Endothelial cell of umbilical vein (primary cell): ENCODE measurements at regions of chr14 and their contacts with region 1.

Region 1: GRCh38 chr14:93132470-93133065 is 16.8 kb upstream of the ITPK1 start:
- DNase-seq: peak; percentile 52
- H3K4me3 ChIP-seq: no peak overlapping the region
- H3K27ac ChIP-seq: no peak overlapping the region
- H3K4me1 ChIP-seq: no peaks in the 10 kb centered on the region
- H3K27me3 ChIP-seq: no peaks in the 10 kb centered on the region
- CTCF ChIP-seq: peak; percentile 30 to 65
- POLR2A ChIP-seq: no peak

Region 2: DNA sequence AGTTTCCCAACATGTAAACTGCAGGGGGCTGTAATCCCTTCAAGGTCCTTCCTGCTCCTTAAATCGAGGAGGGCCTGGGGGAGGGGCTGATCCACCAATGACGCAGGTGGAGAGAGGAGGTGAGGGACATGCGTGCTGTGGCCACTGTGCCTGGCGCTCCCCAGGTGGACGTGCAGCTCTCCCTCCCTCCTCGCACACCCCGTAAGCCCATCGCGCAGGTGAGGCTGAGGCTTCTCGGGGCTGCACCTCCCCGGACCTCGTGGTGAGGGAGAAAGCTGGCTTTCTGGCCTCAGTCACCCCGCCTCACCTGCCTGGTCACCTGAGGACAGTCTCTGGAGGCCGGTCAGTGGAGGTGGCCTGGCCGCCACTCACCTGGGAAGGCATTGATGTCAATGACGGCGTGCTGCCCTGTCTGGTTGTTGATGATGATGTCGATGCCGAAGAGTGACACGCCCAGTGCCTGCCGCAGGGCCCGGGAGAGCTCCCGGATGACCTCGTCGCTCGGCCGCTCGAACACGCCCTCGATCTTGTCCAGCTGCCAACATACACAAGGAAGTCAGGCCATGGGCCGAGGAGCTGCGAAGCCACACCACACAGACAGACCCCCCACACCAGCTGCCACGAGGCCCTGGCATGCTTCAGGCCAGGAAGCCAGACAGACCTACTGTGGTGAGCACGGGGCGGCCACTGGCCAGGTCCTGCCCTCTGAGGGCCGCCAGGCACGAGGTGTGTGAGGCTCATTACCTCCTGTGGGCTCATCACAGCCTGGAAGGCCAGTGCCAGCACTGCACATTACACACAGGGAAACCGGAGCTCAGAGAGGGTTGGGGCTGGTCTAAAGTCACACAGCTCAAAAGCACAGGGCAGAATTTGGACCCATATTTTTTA is 186.4 kb before region 1 on chr14:
- CTCF ChIA-PET with region 1: interaction called, 109 read pairs
- POLR2A ChIA-PET with region 1: no interaction called
- dilution Hi-C with region 1: loop called (anchors 25 kb)
- intact Hi-C with region 1: no loop called
- DNase-seq: peak; percentile 70
- H3K4me3 ChIP-seq: no peak overlapping the region
- H3K27ac ChIP-seq: no peak overlapping the region
- H3K4me1 ChIP-seq: peaks cover 5% of the 10 kb centered on the region
- H3K27me3 ChIP-seq: no peaks in the 10 kb centered on the region
- CTCF ChIP-seq: no peak
- POLR2A ChIP-seq: no peak

Region 3: GRCh38 chr14:93160353-93160801 is 27.8 kb after region 1 on chr14:
- CTCF ChIA-PET with region 1: interaction called, 7 read pairs
- POLR2A ChIA-PET with region 1: interaction called, 12 read pairs
- dilution Hi-C with region 1: no loop called
- intact Hi-C with region 1: no loop called
- DNase-seq: no peak
- H3K4me3 ChIP-seq: no peak overlapping the region
- H3K27ac ChIP-seq: no peak overlapping the region
- H3K4me1 ChIP-seq: no peaks in the 10 kb centered on the region
- H3K27me3 ChIP-seq: no peaks in the 10 kb centered on the region
- CTCF ChIP-seq: peak; percentile 13 to 28
- POLR2A ChIP-seq: no peak